ENCODE measurements at regions of chr9 and their contacts with region 1.

Region 1: GRCh38 chr9:128786681-128787601 is at the start of gene TBC1D13:
- DNase-seq: peak; percentile 97
- H3K4me3 Mint-ChIP-seq: peak within 1 kb of the TSS; percentile 95
- H3K27ac Mint-ChIP-seq: peak within 1 kb of the TSS; percentile 91
- H3K4me1 Mint-ChIP-seq: peaks cover 19% of the 10 kb centered on the region
- H3K27me3 Mint-ChIP-seq: no peaks in the 10 kb centered on the region
- total RNA-seq, gene TBC1D13: 19.2 and 19.9 TPM in 2 replicates

Region 2: DNA sequence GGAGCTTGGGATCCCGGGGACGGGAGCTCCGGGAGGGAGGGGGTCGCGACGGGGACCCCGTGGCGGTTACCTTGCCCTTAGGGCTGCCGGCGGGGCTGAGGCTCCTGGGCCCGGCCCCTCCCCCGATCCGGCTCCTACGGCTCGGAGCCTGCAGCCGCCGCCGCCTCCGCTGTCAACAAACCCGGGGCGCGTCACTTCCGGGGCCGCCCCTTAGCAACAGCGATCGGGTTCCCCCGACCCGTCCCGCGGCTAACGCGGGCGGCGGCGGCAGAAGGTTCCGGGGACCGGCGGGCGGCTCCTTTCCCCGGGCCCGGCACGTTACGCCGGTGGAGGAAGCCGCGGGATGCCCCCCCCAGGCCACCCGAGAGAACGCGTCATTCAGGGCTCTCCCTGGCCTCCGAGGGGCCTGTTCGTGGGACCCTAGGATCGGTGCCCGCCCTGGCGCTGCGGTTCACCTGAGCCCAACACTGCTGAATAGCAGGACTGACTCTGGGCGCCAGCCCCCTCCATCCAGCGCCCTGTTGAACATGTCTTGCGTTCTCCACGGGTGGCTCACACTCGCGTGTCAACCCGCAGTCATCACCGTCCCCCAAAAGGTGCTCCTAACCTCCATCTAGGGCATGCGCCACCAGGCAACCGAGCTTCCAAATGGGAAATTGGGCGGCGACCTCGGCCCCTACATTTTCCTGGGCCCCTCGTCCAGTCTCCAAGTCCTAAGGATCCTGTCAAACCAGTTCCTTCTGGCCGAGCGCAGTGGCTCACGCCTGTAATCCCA is 15.0 kb before region 1 on chr9 and contains the start of gene ZER1:
- intact Hi-C with region 1: loop called (anchors 1 kb)
- DNase-seq: peak; percentile 99
- H3K4me3 Mint-ChIP-seq: peak within 1 kb of the TSS; percentile 87
- H3K27ac Mint-ChIP-seq: peak within 1 kb of the TSS; percentile 90
- H3K4me1 Mint-ChIP-seq: peaks cover 15% of the 10 kb centered on the region
- H3K27me3 Mint-ChIP-seq: no peaks in the 10 kb centered on the region
- total RNA-seq, gene ZER1: 12.3 and 14.4 TPM in 2 replicates

Measured in activated CD4-positive, alpha-beta T cell treated with anti-CD3 and anti-CD28 coated beads, Interleukin-2, amount 10 ng/mL, durations not matched to agents 24 days and 14 days (primary cell).